Endothelial cell of umbilical vein (primary cell): ENCODE measurements at regions of chr10 and their contacts with region 1.

Region 1: GRCh38 chr10:45000752-45001380 is at the start of gene ZNF22:
- DNase-seq: peak; percentile 75
- H3K4me3 ChIP-seq: peak within 1 kb of the TSS; percentile 34 to 86 (median 48)
- H3K27ac ChIP-seq: peak within 1 kb of the TSS; percentile 89
- H3K4me1 ChIP-seq: peaks cover 27% of the 10 kb centered on the region
- H3K27me3 ChIP-seq: no peaks in the 10 kb centered on the region
- CTCF ChIP-seq: peak in 1 of 2 donors; percentile 19
- POLR2A ChIP-seq: peak; percentile 80
- total RNA-seq, gene ZNF22: 45.0 and 48.7 TPM in 2 replicates

Region 2: GRCh38 chr10:43734716-43735115 is 1266.2 kb before region 1 on chr10:
- CTCF ChIA-PET with region 1: no interaction called
- POLR2A ChIA-PET with region 1: no interaction called
- dilution Hi-C with region 1: no loop called
- intact Hi-C with region 1: no loop called
- DNase-seq: no peak
- H3K4me3 ChIP-seq: no peak overlapping the region
- H3K27ac ChIP-seq: no peak overlapping the region
- H3K4me1 ChIP-seq: no peaks in the 10 kb centered on the region
- H3K27me3 ChIP-seq: no peaks in the 10 kb centered on the region
- CTCF ChIP-seq: no peak
- POLR2A ChIP-seq: no peak

Region 3: DNA sequence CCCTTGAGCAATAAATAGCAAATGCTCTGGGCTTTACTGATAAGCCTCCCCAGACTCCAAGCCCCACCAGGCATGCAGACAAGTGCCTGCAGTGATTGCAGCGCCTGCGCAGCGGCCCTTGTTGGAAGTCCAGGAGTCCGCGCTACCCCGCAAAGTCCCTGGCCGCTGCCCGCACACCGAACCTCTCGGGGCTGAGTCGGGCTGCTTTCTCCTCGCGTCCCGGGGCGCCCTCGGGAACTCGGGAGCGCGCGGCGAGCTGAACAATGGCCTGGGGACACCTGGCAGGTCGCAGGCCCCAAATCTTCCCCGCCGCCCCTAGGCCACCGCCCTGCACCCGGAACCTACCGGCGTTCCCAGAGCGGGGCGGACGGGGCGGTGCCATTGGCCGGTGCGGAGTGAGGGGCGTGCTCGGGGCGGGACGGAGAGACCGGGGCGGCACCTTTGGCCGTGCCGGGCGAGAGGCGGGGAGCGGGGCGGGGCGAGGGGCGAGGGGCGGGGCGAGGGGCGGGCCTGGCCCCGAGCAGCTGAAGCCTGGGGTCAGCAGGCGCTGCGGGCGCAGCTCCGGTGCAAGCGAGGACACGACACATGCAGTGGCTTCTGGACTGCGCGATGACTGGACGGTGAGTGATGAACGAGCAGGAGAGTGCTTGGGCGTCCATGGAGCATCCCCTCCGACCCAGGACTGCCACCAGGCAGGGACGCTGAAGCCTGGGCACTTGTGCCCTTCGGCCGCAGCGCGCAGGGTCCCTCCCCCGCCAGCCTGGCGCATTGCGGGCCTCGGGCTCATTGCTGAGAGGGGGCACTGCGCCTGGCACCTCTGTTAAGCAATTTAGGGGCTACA is 41.4 kb before region 1 on chr10 and contains the start of gene RASSF4:
- CTCF ChIA-PET with region 1: interaction called, 4 read pairs
- POLR2A ChIA-PET with region 1: no interaction called
- dilution Hi-C with region 1: no loop called
- intact Hi-C with region 1: loop called (anchors 1 kb)
- DNase-seq: peak; percentile 90
- H3K4me3 ChIP-seq: peak within 1 kb of the TSS; percentile 40 to 85 (median 74)
- H3K27ac ChIP-seq: peak within 1 kb of the TSS; percentile 57
- H3K4me1 ChIP-seq: peaks cover 11% of the 10 kb centered on the region
- H3K27me3 ChIP-seq: no peaks in the 10 kb centered on the region
- CTCF ChIP-seq: no peak
- POLR2A ChIP-seq: peak; percentile 82
- total RNA-seq, gene RASSF4: 4.6 and 7.6 TPM in 2 replicates

Region 4: GRCh38 chr10:44981172-44982113 is 19.4 kb before region 1 on chr10:
- CTCF ChIA-PET with region 1: interaction called, 17 read pairs
- POLR2A ChIA-PET with region 1: interaction called, 48 read pairs
- dilution Hi-C with region 1: no loop called
- intact Hi-C with region 1: loop called (anchors 1 kb)
- DNase-seq: peak; percentile 93
- H3K4me3 ChIP-seq: no peak overlapping the region
- H3K27ac ChIP-seq: peak overlapping the region; percentile 94
- H3K4me1 ChIP-seq: peaks cover 55% of the 10 kb centered on the region
- H3K27me3 ChIP-seq: no peaks in the 10 kb centered on the region
- CTCF ChIP-seq: no peak
- POLR2A ChIP-seq: no peak